Right ventricle myocardium inferior (tissue), 1 donor: ENCODE measurements at regions of chr2 and their contacts with region 1.

Region 1: DNA sequence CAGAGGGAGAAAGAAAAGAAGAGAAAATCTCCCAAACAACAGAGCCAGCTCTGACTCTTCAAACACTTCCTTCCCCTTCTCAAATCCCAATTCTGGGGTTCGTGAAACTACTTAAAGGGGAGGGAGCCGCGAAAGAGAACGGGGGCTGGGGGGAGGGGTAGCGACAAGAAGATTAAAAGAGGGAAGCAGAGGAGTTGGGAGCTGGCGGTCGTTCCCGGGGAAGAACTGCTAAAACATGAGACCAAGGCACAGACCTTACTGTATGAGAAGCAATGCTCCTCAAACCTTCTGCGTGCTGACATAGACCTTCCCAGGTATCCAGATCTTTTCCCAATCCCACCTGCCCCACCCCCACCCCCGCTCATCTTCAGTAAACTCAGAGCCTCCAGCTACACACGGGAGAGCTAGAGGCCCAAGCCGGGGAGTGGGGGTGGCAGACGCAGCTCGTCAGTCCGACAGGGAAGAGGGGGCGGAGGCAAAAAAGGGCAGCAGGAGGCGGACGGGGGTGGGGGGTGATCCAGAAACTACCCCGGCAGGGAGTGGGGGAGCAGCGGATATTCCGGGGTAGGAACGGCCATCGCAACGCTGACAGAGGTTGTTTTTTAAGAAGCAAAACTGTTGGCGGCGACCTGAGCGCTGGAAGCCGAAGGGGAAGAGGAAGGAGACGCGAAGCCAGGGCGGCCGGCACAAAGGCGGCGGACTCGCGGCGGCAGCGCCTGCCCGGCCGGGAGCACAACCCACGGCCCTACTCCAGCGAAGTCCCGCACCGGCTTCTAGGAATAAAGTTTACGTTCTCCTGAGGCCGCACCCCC is 1.0 kb downstream of the BAZ2B start:
- DNase-seq: peak; percentile 94
- ATAC-seq: peak; percentile 97

Region 2: GRCh38 chr2:158963071-158963470 is 652.3 kb before region 1 on chr2:
- intact Hi-C with region 1: loop called (anchors 2 kb)
- DNase-seq: no peak
- ATAC-seq: no peak

Region 3: DNA sequence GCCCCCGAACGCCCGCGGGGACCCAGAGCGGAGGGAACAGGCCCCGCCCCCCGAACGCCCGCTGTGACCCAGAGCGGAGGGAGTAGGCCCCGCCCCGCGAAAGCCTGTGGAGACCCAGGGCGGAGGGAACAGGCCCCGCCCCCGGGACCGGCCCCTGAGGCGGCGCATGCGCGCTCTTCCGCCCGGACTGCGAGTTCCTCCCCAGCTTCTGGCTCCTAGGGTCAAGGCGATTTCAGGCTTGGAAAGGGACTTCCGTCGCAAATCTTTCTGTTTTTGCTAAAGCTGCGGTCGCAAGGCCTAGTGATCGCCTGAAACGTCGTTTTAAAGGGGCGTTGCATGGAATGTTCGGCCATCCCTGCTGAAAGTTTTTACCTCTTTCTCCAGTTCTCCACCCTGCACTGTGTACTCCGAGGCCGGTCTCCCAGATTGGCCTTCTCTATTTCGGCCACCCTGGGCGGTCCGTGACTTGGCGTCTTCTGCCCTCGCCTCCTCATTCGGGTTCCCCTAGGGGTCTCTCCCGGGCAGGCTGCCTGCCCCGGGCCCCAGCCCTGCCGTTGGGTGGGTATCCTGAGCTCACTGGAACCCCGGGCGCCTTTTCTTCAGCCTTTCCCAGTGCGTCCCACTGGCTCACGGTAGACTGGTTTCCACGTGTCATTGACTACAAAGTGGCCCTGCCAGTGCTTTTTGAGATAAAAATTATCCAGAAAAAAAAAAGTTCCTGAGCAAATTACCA is 328.5 kb before region 1 on chr2:
- intact Hi-C with region 1: loop called (anchors 10 kb)
- DNase-seq: peak; percentile 100
- ATAC-seq: peak; percentile 100

Region 4: GRCh38 chr2:159650574-159650973 is 35.2 kb after region 1 on chr2:
- intact Hi-C with region 1: no loop called
- DNase-seq: no peak
- ATAC-seq: peak; percentile 23

Region 5: GRCh38 chr2:159797543-159798375 is 182.4 kb after region 1 on chr2 and contains the start of gene CD302:
- intact Hi-C with region 1: loop called (anchors 5 kb)
- DNase-seq: peak; percentile 92
- ATAC-seq: peak; percentile 87
- total RNA-seq, gene CD302: 21.9 TPM